CD8-positive, alpha-beta T cell (primary cell): ENCODE measurements at regions of chr20 and their contacts with region 1.

Region 1: DNA sequence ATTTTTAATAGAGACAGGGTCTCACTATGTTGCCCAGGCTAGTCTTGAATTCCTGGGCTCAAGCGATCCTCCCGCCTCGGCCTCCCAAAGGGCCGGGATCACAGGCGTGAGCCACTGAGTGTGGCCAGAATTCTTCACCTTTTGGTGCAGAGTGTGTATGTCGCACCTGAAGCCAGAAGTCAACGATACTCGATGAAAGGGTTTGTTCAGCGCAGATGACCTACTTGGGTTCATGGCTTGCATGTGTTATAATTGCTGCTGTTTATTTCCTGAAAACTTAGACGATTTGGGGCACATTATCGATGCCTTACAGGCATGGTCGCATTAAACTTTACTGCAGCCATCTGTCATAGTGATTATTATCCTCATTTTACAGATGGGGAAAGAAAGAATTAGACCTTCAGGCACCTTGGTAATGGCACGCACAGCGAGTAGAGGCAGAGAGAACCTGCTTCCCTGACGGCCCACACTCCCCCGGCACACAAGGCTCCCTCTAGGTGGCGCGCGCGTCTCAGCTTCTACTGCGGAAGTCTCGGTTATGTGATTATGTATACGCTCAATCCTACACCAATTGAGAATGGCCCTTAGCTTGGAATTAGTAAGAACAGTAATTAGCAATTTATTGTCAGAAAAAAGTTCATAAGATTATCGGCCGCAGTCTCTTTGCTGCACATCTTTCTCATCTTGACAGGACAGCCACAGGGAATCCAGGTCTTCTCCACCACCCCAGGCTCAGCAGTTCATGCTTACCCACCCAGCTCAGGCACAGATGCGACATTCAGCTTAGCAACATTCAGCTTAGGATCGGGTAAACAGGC is 212.8 kb upstream of the PROKR2 start:
- DNase-seq: peak; percentile 68 to 87 (median 83)
- ATAC-seq: peak; percentile 92
- H3K4me3 ChIP-seq: peak overlapping the region in 1 of 2 experiments; percentile 13
- H3K4me3 Mint-ChIP-seq: peak overlapping the region; percentile 76
- H3K27ac ChIP-seq: no peak overlapping the region
- H3K27ac Mint-ChIP-seq: peak overlapping the region; percentile 74
- H3K4me1 ChIP-seq: peaks cover 4% of the 10 kb centered on the region
- H3K4me1 Mint-ChIP-seq: peaks cover 11% of the 10 kb centered on the region
- H3K27me3 ChIP-seq: no peaks in the 10 kb centered on the region
- H3K27me3 Mint-ChIP-seq: no peaks in the 10 kb centered on the region
- CTCF ChIP-seq: peak; percentile 48

Region 2: GRCh38 chr20:5513975-5514516 is 15.5 kb before region 1 on chr20:
- CTCF ChIA-PET with region 1: interaction called, 19 read pairs
- POLR2A ChIA-PET with region 1: no interaction called
- intact Hi-C with region 1: no loop called
- DNase-seq: no peak
- ATAC-seq: no peak
- H3K4me3 ChIP-seq: no peak overlapping the region
- H3K4me3 Mint-ChIP-seq: no peak overlapping the region
- H3K27ac ChIP-seq: no peak overlapping the region
- H3K27ac Mint-ChIP-seq: no peak overlapping the region
- H3K4me1 ChIP-seq: no peaks in the 10 kb centered on the region
- H3K4me1 Mint-ChIP-seq: peaks cover 4% of the 10 kb centered on the region
- H3K27me3 ChIP-seq: no peaks in the 10 kb centered on the region
- H3K27me3 Mint-ChIP-seq: no peaks in the 10 kb centered on the region
- CTCF ChIP-seq: no peak

Region 3: GRCh38 chr20:5550733-5551529 is 21.4 kb after region 1 on chr20:
- CTCF ChIA-PET with region 1: interaction called, 24 read pairs
- POLR2A ChIA-PET with region 1: interaction called, 4 read pairs
- intact Hi-C with region 1: no loop called
- DNase-seq: no peak
- ATAC-seq: peak; percentile 50
- H3K4me3 ChIP-seq: no peak overlapping the region
- H3K4me3 Mint-ChIP-seq: no peak overlapping the region
- H3K27ac ChIP-seq: no peak overlapping the region
- H3K27ac Mint-ChIP-seq: peak overlapping the region; percentile 8
- H3K4me1 ChIP-seq: no peaks in the 10 kb centered on the region
- H3K4me1 Mint-ChIP-seq: peaks cover 10% of the 10 kb centered on the region
- H3K27me3 ChIP-seq: no peaks in the 10 kb centered on the region
- H3K27me3 Mint-ChIP-seq: no peaks in the 10 kb centered on the region
- CTCF ChIP-seq: no peak

Region 4: DNA sequence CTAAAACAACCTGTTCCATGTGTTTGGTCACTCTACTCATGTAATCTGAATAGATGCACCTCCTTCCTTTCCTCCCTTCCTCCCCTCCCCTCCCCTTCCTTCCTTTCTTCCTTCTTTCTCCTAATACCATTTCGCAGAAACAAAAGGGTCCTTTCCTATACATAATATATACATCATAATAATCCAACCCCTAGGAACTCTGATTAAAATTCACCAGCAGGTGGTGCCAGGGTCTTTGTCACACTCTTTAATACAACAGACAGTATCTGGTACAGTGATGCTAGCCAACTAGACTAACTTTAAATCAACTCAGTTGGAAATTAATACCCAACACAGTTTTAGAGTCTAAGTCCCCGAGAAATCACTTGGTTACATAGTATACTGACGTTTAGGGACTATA is 39.5 kb after region 1 on chr20:
- CTCF ChIA-PET with region 1: interaction called, 11 read pairs
- POLR2A ChIA-PET with region 1: no interaction called
- intact Hi-C with region 1: loop called in 1 of 2 experiments (anchors 2 kb)
- DNase-seq: peak; percentile 15 to 72 (median 47)
- ATAC-seq: peak; percentile 87
- H3K4me3 ChIP-seq: no peak overlapping the region
- H3K4me3 Mint-ChIP-seq: no peak overlapping the region
- H3K27ac ChIP-seq: no peak overlapping the region
- H3K27ac Mint-ChIP-seq: no peak overlapping the region
- H3K4me1 ChIP-seq: no peaks in the 10 kb centered on the region
- H3K4me1 Mint-ChIP-seq: peaks cover 24% of the 10 kb centered on the region
- H3K27me3 ChIP-seq: no peaks in the 10 kb centered on the region
- H3K27me3 Mint-ChIP-seq: no peaks in the 10 kb centered on the region
- CTCF ChIP-seq: peak; percentile 72

Region 5: GRCh38 chr20:5788385-5788895 is 258.9 kb after region 1 on chr20:
- CTCF ChIA-PET with region 1: interaction called, 109 read pairs
- POLR2A ChIA-PET with region 1: interaction called, 6 read pairs
- intact Hi-C with region 1: loop called (anchors 1 kb)
- DNase-seq: peak; percentile 48 to 91 (median 76)
- ATAC-seq: peak; percentile 99
- H3K4me3 ChIP-seq: no peak overlapping the region
- H3K4me3 Mint-ChIP-seq: no peak overlapping the region
- H3K27ac ChIP-seq: no peak overlapping the region
- H3K27ac Mint-ChIP-seq: no peak overlapping the region
- H3K4me1 ChIP-seq: no peaks in the 10 kb centered on the region
- H3K4me1 Mint-ChIP-seq: peaks cover 5% of the 10 kb centered on the region
- H3K27me3 ChIP-seq: no peaks in the 10 kb centered on the region
- H3K27me3 Mint-ChIP-seq: no peaks in the 10 kb centered on the region
- CTCF ChIP-seq: peak; percentile 95

Region 6: DNA sequence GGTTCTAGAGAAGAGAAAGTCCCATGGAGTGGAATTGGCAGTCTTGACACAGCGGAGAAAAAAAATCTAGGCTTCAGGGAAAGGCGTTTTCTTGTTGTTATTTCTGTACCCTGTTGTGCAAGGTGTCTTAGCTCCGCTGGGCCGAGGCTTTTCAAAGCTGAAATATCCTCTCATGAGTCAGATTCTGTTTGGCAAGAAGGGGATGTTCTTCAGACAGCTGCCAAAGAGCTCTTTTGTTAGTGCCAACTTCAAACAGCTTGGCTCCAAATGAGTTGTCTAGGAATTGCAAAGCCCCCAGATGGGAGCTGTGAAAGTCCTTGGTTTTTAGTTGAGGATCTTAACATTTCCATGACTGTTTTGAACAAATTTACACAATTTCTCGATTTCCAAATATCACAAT is 478.7 kb after region 1 on chr20:
- CTCF ChIA-PET with region 1: interaction called, 3 read pairs
- POLR2A ChIA-PET with region 1: interaction called, 3 read pairs
- intact Hi-C with region 1: loop called in 1 of 2 experiments (anchors 2 kb)
- DNase-seq: peak in 1 of 9 experiments; percentile 27
- ATAC-seq: no peak
- H3K4me3 ChIP-seq: no peak overlapping the region
- H3K4me3 Mint-ChIP-seq: no peak overlapping the region
- H3K27ac ChIP-seq: no peak overlapping the region
- H3K27ac Mint-ChIP-seq: peak overlapping the region; percentile 4
- H3K4me1 ChIP-seq: peaks cover 25% of the 10 kb centered on the region
- H3K4me1 Mint-ChIP-seq: peaks cover 51% of the 10 kb centered on the region
- H3K27me3 ChIP-seq: no peaks in the 10 kb centered on the region
- H3K27me3 Mint-ChIP-seq: no peaks in the 10 kb centered on the region
- CTCF ChIP-seq: no peak

Region 7: GRCh38 chr20:6081236-6081635 is 551.7 kb after region 1 on chr20:
- CTCF ChIA-PET with region 1: interaction called, 69 read pairs
- POLR2A ChIA-PET with region 1: no interaction called
- intact Hi-C with region 1: loop called in 1 of 2 experiments (anchors 1 kb)
- DNase-seq: no peak
- ATAC-seq: no peak
- H3K4me3 ChIP-seq: no peak overlapping the region
- H3K4me3 Mint-ChIP-seq: no peak overlapping the region
- H3K27ac ChIP-seq: no peak overlapping the region
- H3K27ac Mint-ChIP-seq: no peak overlapping the region
- H3K4me1 ChIP-seq: no peaks in the 10 kb centered on the region
- H3K4me1 Mint-ChIP-seq: no peaks in the 10 kb centered on the region
- H3K27me3 ChIP-seq: no peaks in the 10 kb centered on the region
- H3K27me3 Mint-ChIP-seq: peaks cover 16% of the 10 kb centered on the region
- CTCF ChIP-seq: no peak